Endothelial cell of umbilical vein (primary cell): ENCODE measurements at regions of chr14 and their contacts with region 1.

Region 1: GRCh38 chr14:87992718-87993628 is at the start of gene GALC:
- DNase-seq: peak; percentile 94
- H3K4me3 ChIP-seq: peak within 1 kb of the TSS; percentile 73 to 82 (median 74)
- H3K27ac ChIP-seq: peak within 1 kb of the TSS; percentile 58
- H3K4me1 ChIP-seq: peaks cover 12% of the 10 kb centered on the region
- H3K27me3 ChIP-seq: no peaks in the 10 kb centered on the region
- CTCF ChIP-seq: no peak
- POLR2A ChIP-seq: peak; percentile 76
- total RNA-seq, gene GALC: 14.2 and 15.0 TPM in 2 replicates

Region 2: GRCh38 chr14:87286191-87286590 is 706.8 kb before region 1 on chr14:
- CTCF ChIA-PET with region 1: no interaction called
- POLR2A ChIA-PET with region 1: no interaction called
- dilution Hi-C with region 1: no loop called
- intact Hi-C with region 1: no loop called
- DNase-seq: no peak
- H3K4me3 ChIP-seq: no peak overlapping the region
- H3K27ac ChIP-seq: no peak overlapping the region
- H3K4me1 ChIP-seq: no peaks in the 10 kb centered on the region
- H3K27me3 ChIP-seq: no peaks in the 10 kb centered on the region
- CTCF ChIP-seq: no peak
- POLR2A ChIP-seq: no peak

Region 3: DNA sequence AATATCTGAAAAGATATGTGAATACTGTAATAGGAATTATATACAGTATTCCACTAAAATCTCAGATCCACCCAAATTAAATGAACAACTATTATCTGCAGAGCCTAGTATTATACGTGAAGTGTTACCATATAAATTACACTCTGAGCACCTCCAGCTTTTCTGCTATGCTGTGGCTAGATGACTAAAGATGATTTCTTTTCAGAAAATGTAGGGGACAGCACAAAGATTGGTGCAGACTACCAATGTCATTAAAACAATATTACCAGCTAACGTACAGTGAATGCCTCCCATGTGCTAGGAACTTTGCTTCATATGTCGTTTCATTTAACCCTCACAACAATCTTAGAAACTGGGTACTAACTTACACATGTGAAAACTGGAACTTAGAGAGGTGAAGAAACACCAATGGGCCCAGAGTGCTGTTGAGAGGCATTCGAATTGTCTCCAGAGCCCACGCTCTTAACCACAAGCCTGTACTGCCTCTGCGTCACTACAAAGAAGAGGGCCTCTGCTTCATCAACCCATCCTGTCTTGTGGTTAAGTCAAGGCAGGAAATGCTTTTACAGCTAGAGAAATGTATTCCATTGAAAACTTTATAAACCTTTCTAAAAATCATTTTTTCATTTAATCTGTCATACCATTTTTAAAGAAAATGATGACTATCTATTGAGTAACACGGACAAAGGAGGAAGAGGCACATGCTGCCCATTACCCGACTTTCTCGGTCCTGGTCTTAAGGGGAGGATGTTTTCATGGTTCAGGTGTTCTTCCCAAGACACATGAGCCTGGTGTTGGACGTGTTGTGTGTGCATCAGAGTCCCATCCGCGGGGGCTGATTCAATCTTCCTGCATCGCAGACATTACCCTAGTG is 13.2 kb after region 1 on chr14:
- CTCF ChIA-PET with region 1: no interaction called
- POLR2A ChIA-PET with region 1: no interaction called
- dilution Hi-C with region 1: no loop called
- intact Hi-C with region 1: no loop called
- DNase-seq: no peak
- H3K4me3 ChIP-seq: no peak overlapping the region
- H3K27ac ChIP-seq: no peak overlapping the region
- H3K4me1 ChIP-seq: no peaks in the 10 kb centered on the region
- H3K27me3 ChIP-seq: no peaks in the 10 kb centered on the region
- CTCF ChIP-seq: no peak
- POLR2A ChIP-seq: no peak

Region 4: DNA sequence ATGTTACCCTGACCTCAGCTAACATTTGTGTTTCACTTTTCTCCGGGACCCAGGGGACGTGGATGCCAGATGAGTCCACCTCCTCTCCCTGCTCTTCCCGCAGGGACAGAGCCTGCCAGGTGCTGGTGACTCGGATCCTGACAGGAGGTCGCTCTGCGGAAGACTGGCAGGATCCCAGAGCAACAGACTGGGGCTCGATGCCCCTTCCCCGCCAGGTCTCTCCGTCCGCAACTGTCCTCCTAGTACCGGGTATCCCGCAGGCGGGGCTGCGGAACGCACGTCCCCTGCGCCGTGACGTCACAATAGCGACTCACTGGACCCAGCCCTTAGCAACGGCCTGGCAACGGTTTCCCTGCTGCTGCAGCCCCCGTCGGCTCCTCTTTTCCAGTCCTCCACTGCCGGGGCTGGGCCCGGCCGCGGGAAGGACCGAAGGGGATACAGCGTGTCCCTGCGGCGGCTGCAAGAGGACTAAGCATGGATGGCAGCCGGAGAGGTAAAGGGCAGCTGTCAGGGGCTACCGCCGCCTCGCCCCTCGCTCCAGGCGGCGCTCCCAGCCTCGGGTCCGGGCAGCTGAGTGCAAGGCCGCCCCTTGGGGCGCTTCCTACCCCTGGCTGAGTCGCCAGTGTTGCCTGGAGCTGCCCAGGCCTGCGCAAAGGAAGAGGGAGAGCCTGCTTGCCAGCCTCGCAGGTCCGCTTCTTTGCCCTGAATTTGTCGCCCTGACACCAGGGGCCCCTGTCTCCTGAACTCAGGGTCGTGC is 392.6 kb after region 1 on chr14 and contains the start of gene SPATA7:
- CTCF ChIA-PET with region 1: no interaction called
- POLR2A ChIA-PET with region 1: no interaction called
- dilution Hi-C with region 1: no loop called
- intact Hi-C with region 1: loop called (anchors 5 kb)
- DNase-seq: peak; percentile 92
- H3K4me3 ChIP-seq: peak within 1 kb of the TSS; percentile 87 to 94 (median 88)
- H3K27ac ChIP-seq: peak within 1 kb of the TSS; percentile 34
- H3K4me1 ChIP-seq: peaks cover 25% of the 10 kb centered on the region
- H3K27me3 ChIP-seq: peaks cover 11 to 22% of the 10 kb centered on the region in 2 experiments
- CTCF ChIP-seq: no peak
- POLR2A ChIP-seq: peak; percentile 82
- total RNA-seq, gene SPATA7: 8.4 and 9.7 TPM in 2 replicates